Activated CD4-positive, alpha-beta T cell treated with anti-CD3 and anti-CD28 coated beads, Interleukin-2, amount 10 ng/mL, durations not matched to agents 24 days and 14 days (primary cell): ENCODE measurements at regions of chr2 and their contacts with region 1.

Region 1: DNA sequence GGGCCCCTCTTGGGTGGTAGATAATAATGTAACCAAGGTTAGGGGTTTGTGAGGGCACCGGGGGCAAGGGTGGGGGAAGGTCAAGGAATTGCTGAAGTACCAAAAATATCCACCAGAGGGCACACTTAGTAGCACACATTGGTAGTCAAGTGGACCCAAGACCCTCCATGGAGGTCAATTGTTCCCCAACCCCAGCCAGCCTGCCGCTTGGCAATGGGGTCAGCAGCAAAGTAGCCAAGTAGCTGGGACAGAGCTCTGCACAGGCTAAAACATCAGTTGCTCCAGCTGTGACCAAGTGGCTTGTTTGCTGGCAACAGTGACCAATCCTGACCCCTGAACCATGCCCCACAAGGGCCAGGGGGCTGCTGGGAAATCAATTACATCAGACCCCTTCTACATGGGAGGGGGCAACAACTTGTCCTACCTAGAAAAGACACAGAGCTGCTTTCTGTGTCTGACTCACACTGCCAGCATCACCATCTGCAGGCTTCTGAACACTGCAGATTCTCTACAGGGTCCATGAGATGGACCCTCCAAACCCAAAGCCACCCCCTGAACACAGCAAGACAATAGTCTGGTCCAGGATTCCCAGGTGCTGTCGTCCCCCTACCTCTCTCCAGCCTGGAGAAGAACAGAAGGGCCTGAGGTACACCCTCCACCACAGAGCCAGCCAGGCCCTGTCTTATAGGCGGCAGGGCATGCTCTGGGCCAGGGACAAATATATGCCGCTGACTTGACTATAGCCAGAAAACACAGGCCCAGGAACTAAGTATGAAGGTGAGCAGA is 76.0 kb downstream of the EMX1 start:
- DNase-seq: peak; percentile 86
- H3K4me3 Mint-ChIP-seq: no peak overlapping the region
- H3K27ac Mint-ChIP-seq: no peak overlapping the region
- H3K4me1 Mint-ChIP-seq: no peaks in the 10 kb centered on the region
- H3K27me3 Mint-ChIP-seq: no peaks in the 10 kb centered on the region

Region 2: GRCh38 chr2:73163483-73164367 is 170.4 kb after region 1 on chr2:
- intact Hi-C with region 1: loop called (anchors 1 kb)
- DNase-seq: peak; percentile 89
- H3K4me3 Mint-ChIP-seq: no peak overlapping the region
- H3K27ac Mint-ChIP-seq: no peak overlapping the region
- H3K4me1 Mint-ChIP-seq: peaks cover 1% of the 10 kb centered on the region
- H3K27me3 Mint-ChIP-seq: peaks cover 9% of the 10 kb centered on the region

Region 3: DNA sequence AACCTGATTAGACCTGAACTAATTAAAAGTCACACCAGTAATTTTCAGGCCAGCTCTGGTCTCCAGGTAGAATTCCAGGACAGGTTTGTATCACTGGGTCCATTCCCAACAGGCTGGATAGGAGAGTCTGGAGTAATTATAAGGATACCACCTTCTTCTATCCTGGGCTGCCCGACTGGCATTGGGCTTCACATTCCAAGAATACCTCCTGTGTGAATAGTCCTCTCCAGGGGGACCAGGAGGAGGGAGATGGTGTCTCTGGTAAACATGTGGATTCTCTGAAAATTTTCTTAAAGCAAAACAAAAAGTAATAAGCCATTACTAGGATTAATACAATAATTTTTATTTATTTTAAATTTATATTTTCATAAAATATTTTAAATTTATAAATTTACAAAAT is 769.2 kb after region 1 on chr2:
- intact Hi-C with region 1: no loop called
- DNase-seq: no peak
- H3K4me3 Mint-ChIP-seq: no peak overlapping the region
- H3K27ac Mint-ChIP-seq: no peak overlapping the region
- H3K4me1 Mint-ChIP-seq: peaks cover under 1% of the 10 kb centered on the region
- H3K27me3 Mint-ChIP-seq: no peaks in the 10 kb centered on the region